ENCODE measurements at regions of chr13 and their contacts with region 1.

Region 1: GRCh38 chr13:28468023-28468915 is 26.7 kb downstream of the FLT1 start:
- H3K4me3 Mint-ChIP-seq: no peak overlapping the region
- H3K27ac Mint-ChIP-seq: peak overlapping the region; percentile 63
- H3K4me1 Mint-ChIP-seq: peaks cover 48% of the 10 kb centered on the region
- H3K27me3 Mint-ChIP-seq: peaks cover 11% of the 10 kb centered on the region

Region 2: DNA sequence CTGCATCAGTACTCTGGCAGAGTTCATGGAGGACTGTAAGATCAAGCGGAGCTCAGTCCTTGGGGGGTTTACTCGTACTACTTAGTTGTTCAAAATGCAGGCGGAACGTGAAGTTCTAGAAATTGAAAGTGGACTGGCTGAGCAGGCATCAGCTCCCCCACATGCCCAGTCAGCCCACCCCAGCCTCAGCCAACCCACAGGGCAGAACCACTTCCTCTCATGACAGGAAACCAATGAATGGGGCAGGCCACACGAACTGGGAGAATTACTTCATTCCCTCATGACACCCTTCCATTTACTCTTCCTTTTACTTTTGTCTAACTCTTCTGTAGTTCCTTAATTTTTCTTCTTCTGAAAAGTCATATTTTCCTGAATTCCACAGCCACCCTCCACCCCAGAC is 45.3 kb before region 1 on chr13:
- intact Hi-C with region 1: loop called (anchors 5 kb)
- H3K4me3 Mint-ChIP-seq: peak overlapping the region; percentile 50
- H3K27ac Mint-ChIP-seq: peak overlapping the region; percentile 78
- H3K4me1 Mint-ChIP-seq: peaks cover 36% of the 10 kb centered on the region
- H3K27me3 Mint-ChIP-seq: peaks cover 39% of the 10 kb centered on the region

Region 3: GRCh38 chr13:28623782-28624706 is 155.8 kb after region 1 on chr13:
- intact Hi-C with region 1: loop called (anchors 5 kb)
- H3K4me3 Mint-ChIP-seq: no peak overlapping the region
- H3K27ac Mint-ChIP-seq: peak overlapping the region; percentile 86
- H3K4me1 Mint-ChIP-seq: peaks cover 83% of the 10 kb centered on the region
- H3K27me3 Mint-ChIP-seq: no peaks in the 10 kb centered on the region

Measured in dendritic cell treated with granulocyte-macrophage colony-stimulating factor and Interleukin-4, amounts not matched to agents 40 ng/mL and 50 ng/mL, for 4 days (primary cell).